Heart left ventricle (tissue), 16 donors: ENCODE measurements at regions of chr2 and their contacts with region 1.

Region 1: DNA sequence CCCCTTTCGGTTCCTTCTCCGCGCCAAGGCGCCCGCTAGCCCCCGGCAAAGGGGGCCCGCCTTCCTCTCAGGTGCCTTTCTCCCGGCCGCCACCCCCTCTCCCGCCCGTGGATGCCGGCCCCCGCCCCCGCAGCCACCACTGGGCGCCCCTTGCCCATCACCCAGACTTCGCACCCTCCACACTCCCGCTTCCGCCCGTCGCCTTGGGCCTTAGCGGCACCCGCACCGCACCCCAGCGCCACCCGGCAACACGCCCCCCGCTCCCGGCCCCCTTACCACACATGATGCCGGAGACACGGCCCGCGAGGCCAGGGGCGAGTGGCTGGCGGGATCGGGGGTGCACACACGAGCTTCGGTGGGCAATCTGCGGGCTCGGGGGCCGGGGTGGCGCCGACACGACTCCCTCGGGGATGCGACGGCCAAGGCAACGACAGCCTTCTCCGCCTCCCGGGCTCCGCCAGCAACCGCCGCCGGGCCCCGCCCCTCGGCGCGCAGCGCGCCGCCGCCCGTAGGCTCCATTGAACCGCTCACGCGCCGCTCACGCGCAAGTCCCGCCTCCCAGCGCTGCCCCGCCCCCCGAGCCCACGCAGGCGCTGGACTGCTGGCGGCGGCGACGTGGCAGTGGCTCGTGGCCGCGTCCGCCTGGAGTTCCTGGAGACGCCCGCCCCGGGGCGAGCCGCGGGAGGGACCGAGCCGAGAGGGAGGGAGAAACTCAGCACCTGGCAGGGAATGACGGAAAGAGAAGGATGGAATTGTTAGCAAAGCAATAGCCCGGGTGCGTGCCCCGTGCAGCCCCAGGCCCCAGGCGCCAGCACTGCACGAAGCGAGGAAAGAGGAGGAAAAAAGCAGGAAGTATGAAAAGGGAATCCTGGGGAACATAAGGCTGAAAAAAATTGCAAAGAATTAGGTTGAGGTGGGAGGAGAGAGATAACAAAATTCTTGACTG is at the start of gene GFPT1:
- DNase-seq: peak; percentile 94 to 97 (median 96)
- ATAC-seq: peak; percentile 94 to 99 (median 98)
- H3K4me3 ChIP-seq: peak within 1 kb of the TSS; percentile 49 to 98 (median 91)
- H3K27ac ChIP-seq: peak within 1 kb of the TSS; percentile 33 to 89 (median 86)
- H3K4me1 ChIP-seq: peaks cover 0 to 66% (median 21%) of the 10 kb centered on the region in 12 donors
- H3K27me3 ChIP-seq: no peaks in the 10 kb centered on the region
- CTCF ChIP-seq: no peak
- POLR2A ChIP-seq: peak in 1 of 2 donors; percentile 90
- total RNA-seq, gene GFPT1: 22.6 to 87.9 (median 46.9) TPM

Region 2: DNA sequence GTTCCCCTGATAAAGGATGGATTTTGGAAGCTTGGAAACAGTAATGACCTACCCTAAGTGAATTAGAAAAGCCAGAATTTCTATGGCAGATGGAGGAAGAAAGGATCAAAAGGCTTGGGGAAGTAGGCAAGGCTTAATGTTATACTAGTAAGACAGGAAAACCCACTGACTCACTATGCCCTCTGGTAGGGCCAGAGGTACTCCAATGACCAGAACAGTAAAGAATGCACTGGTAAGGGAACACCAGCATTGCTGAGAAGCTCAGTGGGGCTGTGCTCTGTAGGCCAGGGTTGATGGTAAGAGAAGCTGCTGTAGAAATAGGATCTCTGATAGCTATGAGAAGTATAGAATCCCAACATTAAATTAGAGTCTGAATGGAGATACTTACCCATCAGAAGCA is 126.4 kb before region 1 on chr2:
- intact Hi-C with region 1: no loop called
- DNase-seq: no peak
- ATAC-seq: no peak
- H3K4me3 ChIP-seq: no peak overlapping the region
- H3K27ac ChIP-seq: no peak overlapping the region
- H3K4me1 ChIP-seq: peaks cover 0 to 5% (median 0%) of the 10 kb centered on the region in 12 donors
- H3K27me3 ChIP-seq: no peaks in the 10 kb centered on the region
- CTCF ChIP-seq: no peak
- POLR2A ChIP-seq: no peak

Region 3: DNA sequence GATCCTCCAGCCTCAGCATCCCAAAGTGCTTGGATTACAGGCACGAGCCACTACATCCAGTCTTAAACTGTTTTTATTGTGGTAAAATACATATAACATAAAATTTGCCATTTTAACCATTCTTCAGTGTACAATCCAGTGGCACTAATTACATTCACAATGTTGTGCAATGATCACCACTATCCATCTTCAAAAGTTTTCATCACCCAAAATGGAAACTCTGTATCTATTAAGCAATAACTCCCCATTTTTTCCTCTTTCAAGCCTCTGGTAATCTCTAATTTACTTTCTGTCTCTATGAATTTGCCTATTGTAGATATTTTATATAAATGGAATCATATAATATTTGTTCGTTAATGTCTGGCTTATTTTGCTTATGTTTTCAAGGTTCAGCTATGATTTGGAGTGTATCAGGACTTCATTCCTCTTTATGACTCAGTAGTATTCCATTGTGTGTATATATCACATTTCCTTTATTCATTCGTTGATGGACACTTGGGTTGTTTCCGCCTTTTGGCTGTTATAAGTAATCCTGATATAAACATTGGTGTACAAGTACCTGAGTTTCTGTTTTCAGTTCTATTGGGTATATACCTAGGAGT is 71.8 kb before region 1 on chr2:
- intact Hi-C with region 1: no loop called
- DNase-seq: no peak
- ATAC-seq: no peak
- H3K4me3 ChIP-seq: no peak overlapping the region
- H3K27ac ChIP-seq: no peak overlapping the region
- H3K4me1 ChIP-seq: peaks cover 0 to 15% (median 3%) of the 10 kb centered on the region in 12 donors
- H3K27me3 ChIP-seq: no peaks in the 10 kb centered on the region
- CTCF ChIP-seq: no peak
- POLR2A ChIP-seq: no peak

Region 4: DNA sequence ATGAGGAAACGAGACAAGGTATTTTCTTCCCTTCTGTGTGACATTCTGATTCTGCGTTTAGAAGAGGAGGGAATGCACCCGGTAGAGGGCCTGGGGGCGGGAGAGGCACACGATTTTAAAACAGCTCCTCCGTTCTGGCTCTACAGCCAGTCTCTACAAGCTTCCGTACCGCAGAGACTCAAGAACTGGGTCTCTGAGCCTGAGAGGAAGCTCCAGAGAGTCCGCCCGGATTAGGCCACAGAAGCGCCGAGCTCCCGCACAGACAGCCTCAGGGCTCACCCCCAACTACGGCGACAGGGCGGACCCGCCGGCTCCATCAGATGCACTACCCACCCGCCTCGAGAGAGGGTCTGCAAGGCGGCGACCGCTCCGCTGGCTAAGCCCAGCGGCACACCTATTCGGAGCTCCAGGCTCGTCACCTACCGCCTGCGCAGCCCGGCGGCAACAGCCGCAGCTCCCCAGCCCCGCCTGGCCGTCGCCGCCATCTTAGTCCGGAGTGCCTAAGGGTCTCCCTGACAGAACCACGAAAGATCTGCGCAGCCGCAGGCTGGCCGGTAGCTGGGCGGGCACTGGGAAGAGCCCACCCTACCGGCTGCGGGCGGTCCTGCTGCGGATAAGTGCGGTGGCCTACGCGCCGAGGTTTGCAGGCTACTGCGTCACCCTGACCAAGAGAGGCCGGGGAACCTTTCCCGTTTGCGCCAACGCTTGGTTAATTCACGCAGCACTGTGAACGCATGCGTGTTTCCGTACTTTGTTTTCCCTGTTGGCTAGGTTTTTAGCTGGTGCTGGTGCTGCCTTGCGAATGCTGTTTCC is 50.1 kb after region 1 on chr2 and contains the start of gene NFU1:
- intact Hi-C with region 1: loop called in 3 of 10 experiments (anchors 5 kb)
- DNase-seq: peak; percentile 94 to 97 (median 96)
- ATAC-seq: peak; percentile 97 to 99 (median 98)
- H3K4me3 ChIP-seq: peak within 1 kb of the TSS; percentile 70 to 97 (median 84)
- H3K27ac ChIP-seq: peak within 1 kb of the TSS; percentile 84 to 99 (median 96)
- H3K4me1 ChIP-seq: peaks cover 5 to 37% (median 21%) of the 10 kb centered on the region in 12 donors
- H3K27me3 ChIP-seq: no peaks in the 10 kb centered on the region
- CTCF ChIP-seq: peak; percentile 62 to 82 (median 75)
- POLR2A ChIP-seq: peak in 1 of 2 donors; percentile 84
- total RNA-seq, gene NFU1: 76.6 to 144 (median 110) TPM

Region 5: DNA sequence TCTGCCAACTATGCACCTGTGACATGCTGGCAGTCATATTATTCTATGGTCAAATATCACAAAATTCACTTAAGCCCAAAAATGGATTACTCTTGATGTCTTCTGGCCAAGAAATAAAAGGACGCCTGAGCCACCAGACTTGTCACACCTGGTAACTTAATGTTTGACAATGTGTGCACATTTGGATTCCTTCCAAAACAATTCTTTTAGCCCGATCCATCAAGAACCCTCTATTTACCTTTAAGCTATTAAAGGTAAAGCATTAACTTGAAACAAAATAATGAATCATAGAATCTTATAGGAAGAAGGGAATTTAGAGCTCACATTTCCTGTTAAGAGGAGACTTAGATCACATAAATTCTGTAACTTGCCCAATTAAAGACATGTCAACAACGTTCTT is 96.6 kb after region 1 on chr2:
- intact Hi-C with region 1: loop called in 1 of 10 experiments (anchors 10 kb)
- DNase-seq: no peak
- ATAC-seq: no peak
- H3K4me3 ChIP-seq: no peak overlapping the region
- H3K27ac ChIP-seq: no peak overlapping the region
- H3K4me1 ChIP-seq: no peaks in the 10 kb centered on the region
- H3K27me3 ChIP-seq: no peaks in the 10 kb centered on the region
- CTCF ChIP-seq: no peak
- POLR2A ChIP-seq: no peak

Region 6: DNA sequence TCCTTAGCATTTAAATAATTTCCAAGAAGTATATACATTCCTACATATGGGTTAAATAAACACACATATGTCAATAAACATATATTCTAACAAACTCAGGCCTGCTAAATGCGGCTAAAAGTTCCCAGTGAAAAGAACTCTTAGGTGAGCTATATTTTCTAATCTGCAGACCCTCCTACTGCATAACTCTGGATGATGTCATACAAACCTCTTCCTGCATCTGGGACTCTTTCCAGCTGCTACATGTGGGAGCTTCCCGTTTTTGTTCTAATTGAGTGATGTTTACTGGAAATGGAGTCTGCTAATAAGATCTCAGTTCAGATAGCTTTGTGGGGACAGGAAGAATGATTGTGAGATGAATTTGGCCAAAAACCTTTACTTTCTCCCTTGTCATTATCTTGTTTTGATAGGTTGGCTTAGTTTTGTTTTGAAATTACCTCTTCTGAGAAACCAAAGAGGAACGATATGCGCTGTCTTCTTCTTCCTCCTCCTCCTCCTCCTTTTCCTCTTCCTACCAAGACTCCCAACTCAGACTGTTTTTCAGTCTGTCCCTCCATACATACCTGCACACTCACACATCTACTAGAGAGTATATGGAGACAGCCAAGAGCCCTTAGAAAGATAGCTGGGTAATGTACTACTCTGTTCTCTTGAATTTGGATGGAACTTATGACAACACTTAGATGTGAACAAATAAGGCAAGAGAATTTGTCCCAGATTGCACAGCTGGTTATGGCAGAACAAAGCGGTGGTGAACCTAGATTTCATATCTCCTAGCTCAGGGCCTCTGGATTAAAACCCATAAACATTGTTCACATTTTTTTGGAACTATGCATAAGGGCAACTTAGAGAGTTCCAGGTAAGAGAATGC is 296.3 kb after region 1 on chr2:
- intact Hi-C with region 1: no loop called
- DNase-seq: peak in 2 of 5 donors; percentile 60 to 67
- ATAC-seq: peak; percentile 78 to 93 (median 87)
- H3K4me3 ChIP-seq: peak overlapping the region in 9 of 12 donors; percentile 4 to 27 (median 11)
- H3K27ac ChIP-seq: peak overlapping the region; percentile 39 to 84 (median 68)
- H3K4me1 ChIP-seq: peaks cover 3 to 49% (median 17%) of the 10 kb centered on the region in 12 donors
- H3K27me3 ChIP-seq: no peaks in the 10 kb centered on the region
- CTCF ChIP-seq: no peak
- POLR2A ChIP-seq: no peak